Calu3 (cell line): ENCODE measurements at regions of chr7 and their contacts with region 1.

Region 1: GRCh38 chr7:3294432-3295100 is 6.5 kb upstream of the SDK1 start:
- DNase-seq: peak; percentile 65
- H3K4me3 Mint-ChIP-seq: no peak overlapping the region
- H3K27ac Mint-ChIP-seq: no peak overlapping the region
- H3K4me1 Mint-ChIP-seq: peaks cover 12% of the 10 kb centered on the region
- H3K27me3 Mint-ChIP-seq: peaks cover 15% of the 10 kb centered on the region
- CTCF ChIP-seq: no peak

Region 2: GRCh38 chr7:3154912-3155494 is 139.6 kb before region 1 on chr7:
- CTCF ChIA-PET with region 1: no interaction called
- intact Hi-C with region 1: no loop called
- DNase-seq: peak; percentile 69
- H3K4me3 Mint-ChIP-seq: no peak overlapping the region
- H3K27ac Mint-ChIP-seq: no peak overlapping the region
- H3K4me1 Mint-ChIP-seq: peaks cover 22% of the 10 kb centered on the region
- H3K27me3 Mint-ChIP-seq: no peaks in the 10 kb centered on the region
- CTCF ChIP-seq: peak; percentile 88

Region 3: DNA sequence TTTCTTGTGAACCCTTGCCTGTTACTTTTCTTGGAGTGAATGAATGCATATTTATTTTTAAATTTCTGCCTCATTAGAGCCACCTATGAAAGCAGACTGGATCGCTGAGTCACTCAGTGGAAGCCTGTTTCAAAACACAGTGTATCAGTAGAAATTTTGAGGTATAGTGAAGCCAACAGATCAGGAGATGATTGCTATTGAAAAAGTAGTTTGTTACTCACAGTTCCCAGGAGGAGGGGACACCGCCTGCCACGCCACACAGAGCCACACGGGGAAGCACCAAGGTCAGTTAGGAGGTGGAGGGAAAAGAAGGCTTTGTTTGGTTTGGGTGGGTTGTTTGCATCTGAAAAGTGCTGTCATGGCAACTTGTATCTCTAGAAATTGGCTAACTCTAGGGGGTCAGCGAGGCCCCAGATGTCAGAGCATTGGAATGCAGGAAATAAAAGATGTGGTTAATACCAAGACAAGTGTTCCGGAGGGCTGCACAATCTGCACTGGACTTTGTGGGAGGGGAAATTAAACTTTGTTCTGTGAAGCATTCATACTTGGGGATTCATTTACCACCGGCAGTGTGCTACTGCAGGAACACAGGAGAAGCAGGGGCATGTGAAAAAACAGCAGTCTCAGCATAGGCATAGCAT is 99.9 kb before region 1 on chr7:
- CTCF ChIA-PET with region 1: interaction called, 4 read pairs
- intact Hi-C with region 1: loop called (anchors 2 kb)
- DNase-seq: peak; percentile 95
- H3K4me3 Mint-ChIP-seq: peak overlapping the region; percentile 35
- H3K27ac Mint-ChIP-seq: peak overlapping the region; percentile 83
- H3K4me1 Mint-ChIP-seq: peaks cover 69% of the 10 kb centered on the region
- H3K27me3 Mint-ChIP-seq: no peaks in the 10 kb centered on the region
- CTCF ChIP-seq: peak; percentile 87

Region 4: DNA sequence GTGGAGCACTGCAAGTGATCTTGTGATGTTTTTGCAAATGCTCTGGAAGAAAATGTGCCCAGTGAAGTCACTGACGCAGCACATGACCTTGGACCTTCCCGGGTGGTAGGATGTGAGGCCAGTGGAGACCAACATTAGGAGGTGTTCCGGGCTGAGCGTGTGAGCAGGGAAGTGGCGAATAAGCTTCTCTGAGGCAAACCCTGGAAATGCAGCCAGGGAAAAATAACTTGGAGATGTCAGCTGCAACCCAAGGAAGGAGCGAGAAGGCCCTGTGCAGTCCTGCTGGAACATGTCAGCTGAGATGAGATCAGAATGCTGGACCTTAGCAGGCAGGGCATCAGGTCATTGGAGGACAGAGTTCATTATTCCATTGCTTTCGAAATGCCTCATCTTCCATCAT is 12.1 kb before region 1 on chr7:
- CTCF ChIA-PET with region 1: interaction called, 10 read pairs
- intact Hi-C with region 1: no loop called
- DNase-seq: no peak
- H3K4me3 Mint-ChIP-seq: no peak overlapping the region
- H3K27ac Mint-ChIP-seq: no peak overlapping the region
- H3K4me1 Mint-ChIP-seq: no peaks in the 10 kb centered on the region
- H3K27me3 Mint-ChIP-seq: peaks cover 33% of the 10 kb centered on the region
- CTCF ChIP-seq: no peak